ENCODE measurements at regions of chr14 and their contacts with region 1.

Region 1: DNA sequence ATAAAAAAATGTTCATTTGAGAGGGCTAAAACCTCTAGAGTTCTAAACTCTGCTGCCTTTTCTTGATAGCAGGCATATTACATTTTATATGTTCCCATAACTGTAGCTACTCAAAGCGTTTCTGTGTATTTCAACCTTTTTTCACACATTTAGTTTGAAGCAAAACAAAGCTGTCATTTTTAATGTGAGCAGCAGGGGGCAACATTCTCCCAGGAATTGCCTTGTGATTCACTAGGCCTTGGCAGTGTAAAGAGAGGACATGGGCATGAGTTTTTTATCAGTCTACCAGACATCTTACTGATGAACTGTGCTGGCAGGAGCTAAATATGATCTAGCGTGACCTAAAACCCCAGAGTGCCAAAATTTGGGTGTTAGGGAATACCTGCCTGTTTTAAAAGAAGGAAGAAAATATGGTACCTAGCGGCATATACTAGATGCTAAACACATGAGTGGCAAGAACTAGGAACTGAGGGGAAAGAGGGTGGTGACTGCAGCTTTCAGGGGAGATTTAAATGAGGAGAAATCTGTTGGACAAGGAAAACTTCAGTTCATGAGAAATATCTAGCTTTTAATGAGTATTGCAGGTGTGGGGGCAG is 65.3 kb downstream of the IFT43 start:
- DNase-seq: no peak
- H3K4me3 ChIP-seq: no peak overlapping the region
- H3K27ac ChIP-seq: no peak overlapping the region
- H3K4me1 ChIP-seq: peaks cover 4% of the 10 kb centered on the region
- H3K27me3 ChIP-seq: no peaks in the 10 kb centered on the region
- CTCF ChIP-seq: peak; percentile 81

Region 2: DNA sequence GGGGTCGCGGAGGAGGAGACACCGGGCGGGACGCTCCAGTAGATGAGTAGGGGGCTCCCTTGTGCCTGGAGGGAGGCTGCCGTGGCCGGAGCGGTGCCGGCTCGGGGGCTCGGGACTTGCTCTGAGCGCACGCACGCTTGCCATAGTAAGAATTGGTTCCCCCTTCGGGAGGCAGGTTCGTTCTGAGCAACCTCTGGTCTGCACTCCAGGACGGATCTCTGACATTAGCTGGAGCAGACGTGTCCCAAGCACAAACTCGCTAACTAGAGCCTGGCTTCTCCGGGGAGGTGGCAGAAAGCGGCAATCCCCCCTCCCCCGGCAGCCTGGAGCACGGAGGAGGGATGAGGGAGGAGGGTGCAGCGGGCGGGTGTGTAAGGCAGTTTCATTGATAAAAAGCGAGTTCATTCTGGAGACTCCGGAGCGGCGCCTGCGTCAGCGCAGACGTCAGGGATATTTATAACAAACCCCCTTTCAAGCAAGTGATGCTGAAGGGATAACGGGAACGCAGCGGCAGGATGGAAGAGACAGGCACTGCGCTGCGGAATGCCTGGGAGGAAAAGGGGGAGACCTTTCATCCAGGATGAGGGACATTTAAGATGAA is 771.6 kb before region 1 on chr14:
- intact Hi-C with region 1: no loop called
- DNase-seq: peak; percentile 80
- H3K4me3 ChIP-seq: peak overlapping the region; percentile 83
- H3K27ac ChIP-seq: peak overlapping the region; percentile 100
- H3K4me1 ChIP-seq: peaks cover 54% of the 10 kb centered on the region
- H3K27me3 ChIP-seq: no peaks in the 10 kb centered on the region
- CTCF ChIP-seq: no peak

Region 3: GRCh38 chr14:75748336-75748735 is 302.6 kb before region 1 on chr14:
- intact Hi-C with region 1: no loop called
- DNase-seq: no peak
- H3K4me3 ChIP-seq: no peak overlapping the region
- H3K27ac ChIP-seq: no peak overlapping the region
- H3K4me1 ChIP-seq: no peaks in the 10 kb centered on the region
- H3K27me3 ChIP-seq: no peaks in the 10 kb centered on the region
- CTCF ChIP-seq: no peak

Region 4: DNA sequence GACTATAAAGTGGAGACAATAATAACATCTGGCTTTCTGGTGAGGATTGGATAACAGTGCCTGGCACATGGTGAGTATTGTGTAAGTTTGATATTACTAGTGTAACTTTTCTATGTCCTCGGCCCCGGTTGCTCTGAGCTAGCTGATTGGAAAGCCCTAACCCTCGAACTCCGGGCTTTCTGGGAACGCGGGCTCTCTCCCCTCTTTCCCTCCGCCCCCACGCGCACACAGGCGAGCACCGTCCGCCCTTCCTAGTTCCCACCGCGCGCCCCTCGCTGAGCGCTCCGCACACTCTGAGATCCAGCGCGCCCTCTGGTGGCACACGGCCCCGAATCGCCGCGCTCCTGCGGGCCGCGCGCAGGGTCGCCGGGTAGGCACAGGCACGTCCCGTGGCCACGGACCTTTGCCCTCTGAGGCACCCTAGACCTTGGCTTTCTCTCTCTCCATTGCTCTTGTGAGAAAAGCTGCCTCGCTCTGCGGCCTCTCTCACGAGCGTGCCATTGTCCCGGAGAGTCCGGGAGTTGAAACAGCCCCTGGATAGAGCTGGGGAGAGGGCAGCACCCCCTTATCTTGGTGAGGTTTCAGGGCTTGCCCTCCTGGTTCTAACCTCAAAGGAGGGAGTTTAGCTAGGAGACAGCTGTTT is 301.9 kb after region 1 on chr14:
- intact Hi-C with region 1: loop called (anchors 10 kb)
- DNase-seq: peak; percentile 59
- H3K4me3 ChIP-seq: peak overlapping the region; percentile 53
- H3K27ac ChIP-seq: no peak overlapping the region
- H3K4me1 ChIP-seq: peaks cover 18% of the 10 kb centered on the region
- H3K27me3 ChIP-seq: peaks cover 14% of the 10 kb centered on the region
- CTCF ChIP-seq: peak; percentile 92

Region 5: GRCh38 chr14:76386915-76387782 is 336.3 kb after region 1 on chr14:
- intact Hi-C with region 1: loop called (anchors 10 kb)
- DNase-seq: peak; percentile 47
- H3K4me3 ChIP-seq: no peak overlapping the region
- H3K27ac ChIP-seq: no peak overlapping the region
- H3K4me1 ChIP-seq: no peaks in the 10 kb centered on the region
- H3K27me3 ChIP-seq: peaks cover 34% of the 10 kb centered on the region
- CTCF ChIP-seq: peak; percentile 97

Region 6: GRCh38 chr14:76647697-76648298 is 596.9 kb after region 1 on chr14:
- intact Hi-C with region 1: loop called (anchors 10 kb)
- DNase-seq: no peak
- H3K4me3 ChIP-seq: no peak overlapping the region
- H3K27ac ChIP-seq: no peak overlapping the region
- H3K4me1 ChIP-seq: no peaks in the 10 kb centered on the region
- H3K27me3 ChIP-seq: no peaks in the 10 kb centered on the region
- CTCF ChIP-seq: peak; percentile 88